BJ (cell line): ENCODE measurements at regions of chr1 and their contacts with region 1.

Region 1: GRCh38 chr1:17826165-17826488 is 71.0 kb downstream of the ACTL8 start:
- DNase-seq: no peak
- H3K4me3 ChIP-seq: no peak overlapping the region
- H3K27me3 ChIP-seq: no peaks in the 10 kb centered on the region
- CTCF ChIP-seq: peak; percentile 88

Region 2: DNA sequence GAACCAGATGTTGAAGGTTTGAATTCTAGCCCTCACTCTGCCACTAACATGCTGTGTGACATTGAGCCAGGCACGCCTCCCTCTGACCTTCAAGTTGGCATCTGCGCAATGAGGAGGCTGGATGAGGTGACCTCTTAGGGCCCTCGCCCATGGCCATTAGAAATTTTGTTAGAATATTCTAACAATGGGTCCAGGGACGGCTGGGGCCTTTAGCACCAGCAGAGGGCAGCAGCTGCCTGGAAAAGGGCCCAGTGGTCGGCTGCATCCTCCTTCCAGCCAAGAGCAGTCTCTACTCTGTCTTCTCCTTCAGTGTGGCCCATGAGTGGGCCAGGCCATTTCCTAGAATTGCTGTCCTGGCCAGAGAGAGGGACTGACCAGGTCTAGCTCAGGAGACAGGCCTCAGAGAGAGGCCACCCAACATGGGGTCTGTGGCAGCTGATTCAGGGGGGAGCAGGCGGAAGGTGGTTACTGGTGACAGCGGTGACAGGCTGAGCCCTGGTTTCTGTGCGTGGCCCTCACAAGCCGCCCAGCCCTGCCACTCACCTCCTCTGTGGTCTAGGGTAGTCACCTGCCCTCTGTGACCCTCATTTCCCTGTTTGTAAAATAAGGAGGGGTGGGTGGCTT is 172.3 kb before region 1 on chr1:
- CTCF ChIA-PET with region 1: interaction called, 11 read pairs
- POLR2A ChIA-PET with region 1: no interaction called
- DNase-seq: no peak
- H3K4me3 ChIP-seq: no peak overlapping the region
- H3K27me3 ChIP-seq: no peaks in the 10 kb centered on the region
- CTCF ChIP-seq: peak; percentile 84

Region 3: DNA sequence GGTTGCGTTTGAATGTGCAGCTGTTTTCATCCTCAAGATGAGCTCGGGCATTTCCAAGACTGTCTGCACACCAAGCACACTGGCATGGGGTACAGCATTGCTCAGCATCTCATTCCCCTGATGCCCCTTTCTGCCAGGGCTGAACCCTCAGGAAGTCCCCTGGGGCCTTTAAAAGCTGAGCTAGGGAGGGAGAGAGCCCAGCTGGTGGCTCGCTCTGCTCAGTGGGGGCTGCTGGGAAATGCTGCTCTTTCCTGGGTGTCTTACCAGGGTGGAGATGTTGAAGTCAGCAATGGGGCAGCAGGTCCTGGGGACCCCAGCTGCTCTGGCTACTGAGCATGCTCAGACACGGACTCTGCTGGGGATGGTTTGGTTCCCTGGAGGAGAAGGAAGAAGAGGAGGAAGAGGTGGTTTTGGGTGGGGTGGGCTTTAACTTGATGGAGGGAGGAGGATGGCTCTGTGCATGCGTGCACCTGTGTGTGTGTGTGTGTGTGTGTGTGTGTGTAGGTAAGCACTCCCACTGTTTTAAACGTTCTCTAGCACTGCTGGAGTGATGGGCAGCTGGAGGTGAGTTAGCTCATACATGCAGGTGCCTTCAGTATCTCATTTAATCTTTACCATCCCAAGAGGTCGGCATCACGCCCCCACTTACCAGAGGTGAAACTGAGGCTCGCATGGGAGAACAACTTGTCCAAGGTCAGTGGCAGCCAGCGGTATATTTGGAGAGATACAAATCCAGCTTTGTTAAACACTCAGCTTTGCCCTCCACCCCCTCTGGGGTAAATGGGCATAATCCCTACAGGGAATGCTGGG is 30.1 kb before region 1 on chr1:
- CTCF ChIA-PET with region 1: interaction called, 10 read pairs
- POLR2A ChIA-PET with region 1: no interaction called
- DNase-seq: no peak
- H3K4me3 ChIP-seq: no peak overlapping the region
- H3K27me3 ChIP-seq: peaks cover 1% of the 10 kb centered on the region; the same call in 1 of the 2 replicates
- CTCF ChIP-seq: no peak

Region 4: GRCh38 chr1:17808816-17809215 is 17.3 kb before region 1 on chr1:
- CTCF ChIA-PET with region 1: interaction called, 29 read pairs
- POLR2A ChIA-PET with region 1: no interaction called
- DNase-seq: no peak
- H3K4me3 ChIP-seq: no peak overlapping the region
- H3K27me3 ChIP-seq: peaks cover 2% of the 10 kb centered on the region; the same call in 1 of the 2 replicates
- CTCF ChIP-seq: no peak